Activated CD4-positive, alpha-beta memory T cell treated with anti-CD3 and anti-CD28 coated beads for 36 hours (primary cell): ENCODE measurements at regions of chr5 and their contacts with region 1.

Region 1: DNA sequence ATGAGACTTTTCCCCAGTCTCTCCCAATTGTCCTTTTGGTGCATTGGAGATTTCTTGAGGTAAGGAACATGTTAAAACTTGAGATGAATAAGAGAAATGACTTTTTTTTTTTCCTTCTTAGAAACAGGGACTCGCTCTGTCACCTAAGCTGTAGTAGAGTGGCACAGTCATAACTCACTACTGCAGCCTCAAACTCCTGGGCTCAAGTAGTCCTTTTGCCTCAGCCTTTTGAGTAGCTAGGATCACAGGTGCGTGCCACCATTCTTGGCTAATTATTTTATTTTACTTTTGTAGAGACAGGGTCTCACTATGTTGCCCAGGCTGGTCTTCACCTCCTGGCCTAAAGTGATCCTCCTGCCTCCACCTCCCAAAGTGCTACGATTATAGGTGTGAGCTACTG is 25.9 kb downstream of the CDC42SE2 start:
- DNase-seq: peak; percentile 62
- H3K4me3 Mint-ChIP-seq: peak overlapping the region; percentile 75
- H3K27ac Mint-ChIP-seq: peak overlapping the region; percentile 97
- H3K4me1 Mint-ChIP-seq: peaks cover 69% of the 10 kb centered on the region
- H3K27me3 Mint-ChIP-seq: no peaks in the 10 kb centered on the region

Region 2: GRCh38 chr5:131272307-131272706 is 17.4 kb before region 1 on chr5:
- CTCF ChIA-PET with region 1: interaction called, 3 read pairs
- POLR2A ChIA-PET with region 1: interaction called, 7 read pairs
- intact Hi-C with region 1: loop called (anchors 2 kb)
- DNase-seq: no peak
- H3K4me3 Mint-ChIP-seq: peak overlapping the region; percentile 77
- H3K27ac Mint-ChIP-seq: peak overlapping the region; percentile 96
- H3K4me1 Mint-ChIP-seq: peaks cover 75% of the 10 kb centered on the region
- H3K27me3 Mint-ChIP-seq: no peaks in the 10 kb centered on the region

Region 3: GRCh38 chr5:131595088-131596033 is 305.6 kb after region 1 on chr5:
- CTCF ChIA-PET with region 1: no interaction called
- POLR2A ChIA-PET with region 1: no interaction called
- intact Hi-C with region 1: no loop called
- DNase-seq: peak; percentile 33
- H3K4me3 Mint-ChIP-seq: no peak overlapping the region
- H3K27ac Mint-ChIP-seq: peak overlapping the region; percentile 52
- H3K4me1 Mint-ChIP-seq: peaks cover 57% of the 10 kb centered on the region
- H3K27me3 Mint-ChIP-seq: no peaks in the 10 kb centered on the region